PC-9 (cell line): ENCODE measurements at regions of chrX and their contacts with region 1.

Region 1: GRCh38 chrX:56366901-56367300 is 134.7 kb downstream of the KLF8 start:
- DNase-seq: peak in 1 of 2 experiments; percentile 40
- H3K4me3 ChIP-seq: no peak overlapping the region
- H3K27ac ChIP-seq: no peak overlapping the region
- H3K4me1 ChIP-seq: no peaks in the 10 kb centered on the region
- H3K27me3 ChIP-seq: no peaks in the 10 kb centered on the region
- CTCF ChIP-seq: no peak

Region 2: DNA sequence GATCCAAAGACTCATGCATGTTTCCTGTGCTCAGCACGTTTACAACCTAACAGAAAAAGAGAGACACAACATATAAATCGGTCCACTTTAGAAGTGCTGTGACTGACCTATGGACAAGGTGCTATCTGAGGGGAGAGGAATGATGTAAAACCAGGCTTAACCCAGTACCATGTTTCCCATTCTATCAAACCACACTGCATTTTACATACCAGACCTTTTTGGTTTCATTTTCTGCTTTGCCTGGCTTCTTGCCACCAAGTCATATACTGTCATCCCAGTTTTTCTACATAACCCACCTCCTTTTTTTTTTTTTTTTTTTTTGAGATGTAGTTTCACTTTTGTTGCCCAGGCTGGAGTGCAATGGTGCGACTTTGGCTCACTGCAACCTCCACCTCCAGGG is 52.6 kb before region 1 on chrX:
- CTCF ChIA-PET with region 1: no interaction called
- POLR2A ChIA-PET with region 1: no interaction called
- intact Hi-C with region 1: loop called (anchors 10 kb)
- DNase-seq: peak in 1 of 2 experiments; percentile 43
- H3K4me3 ChIP-seq: no peak overlapping the region
- H3K27ac ChIP-seq: no peak overlapping the region
- H3K4me1 ChIP-seq: no peaks in the 10 kb centered on the region
- H3K27me3 ChIP-seq: no peaks in the 10 kb centered on the region
- CTCF ChIP-seq: no peak

Region 3: DNA sequence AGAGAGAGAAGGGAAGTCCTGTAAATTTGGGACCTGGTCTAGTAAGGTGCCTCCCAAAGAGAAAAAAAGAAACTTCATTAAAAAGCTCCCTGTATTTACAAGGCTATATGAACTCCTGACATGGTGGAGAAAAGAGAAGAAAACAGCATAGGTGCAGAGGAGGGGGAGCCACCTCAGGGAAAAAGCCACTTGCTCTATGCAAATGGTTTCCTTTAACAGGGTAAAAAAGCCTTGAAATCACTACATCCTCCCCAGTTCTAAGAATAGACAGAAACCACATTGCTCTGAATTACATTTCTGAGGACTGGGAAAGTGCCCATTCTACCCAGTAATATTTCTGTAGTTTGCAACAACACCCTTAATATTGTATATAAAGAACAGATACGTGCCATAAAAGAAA is 30.7 kb after region 1 on chrX:
- CTCF ChIA-PET with region 1: no interaction called
- POLR2A ChIA-PET with region 1: no interaction called
- intact Hi-C with region 1: no loop called
- DNase-seq: no peak
- H3K4me3 ChIP-seq: no peak overlapping the region
- H3K27ac ChIP-seq: no peak overlapping the region
- H3K4me1 ChIP-seq: no peaks in the 10 kb centered on the region
- H3K27me3 ChIP-seq: no peaks in the 10 kb centered on the region
- CTCF ChIP-seq: no peak